Heart left ventricle (tissue), 16 donors: ENCODE measurements at regions of chr7 and their contacts with region 1.

Region 1: GRCh38 chr7:96486691-96487090 is 164.8 kb upstream of the SLC25A13 start:
- DNase-seq: no peak
- ATAC-seq: no peak
- H3K4me3 ChIP-seq: no peak overlapping the region
- H3K27ac ChIP-seq: no peak overlapping the region
- H3K4me1 ChIP-seq: no peaks in the 10 kb centered on the region
- H3K27me3 ChIP-seq: no peaks in the 10 kb centered on the region
- CTCF ChIP-seq: no peak
- POLR2A ChIP-seq: no peak

Region 2: DNA sequence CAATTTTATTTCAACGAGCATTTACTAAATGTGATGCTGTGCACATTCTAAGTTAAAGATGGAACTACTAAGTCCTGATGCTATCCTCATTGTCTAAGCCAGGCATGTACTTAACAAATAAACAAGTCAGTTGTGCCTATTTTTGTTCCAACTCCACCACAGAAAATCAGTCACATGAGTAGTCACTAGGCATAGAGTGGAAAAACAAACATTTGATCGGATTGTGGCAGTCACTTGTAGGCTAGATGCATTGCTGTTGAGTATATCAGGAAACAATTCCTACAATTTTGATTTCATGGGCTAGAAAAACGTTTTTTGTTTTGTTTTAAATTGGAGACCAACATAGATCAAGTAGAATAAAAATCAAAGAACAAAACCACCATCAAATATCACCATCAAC is 12.8 kb after region 1 on chr7:
- intact Hi-C with region 1: loop called in 1 of 10 experiments (anchors 1 kb)
- DNase-seq: no peak
- ATAC-seq: no peak
- H3K4me3 ChIP-seq: no peak overlapping the region
- H3K27ac ChIP-seq: no peak overlapping the region
- H3K4me1 ChIP-seq: no peaks in the 10 kb centered on the region
- H3K27me3 ChIP-seq: no peaks in the 10 kb centered on the region
- CTCF ChIP-seq: no peak
- POLR2A ChIP-seq: no peak